ENCODE measurements at regions of chr21 and their contacts with region 1.

Region 1: GRCh38 chr21:31580866-31581276 is 78.6 kb upstream of the SOD1 start:
- DNase-seq: peak; percentile 69 to 70
- H3K4me3 ChIP-seq: no peak overlapping the region
- H3K4me3 Mint-ChIP-seq: no peak overlapping the region
- H3K27ac Mint-ChIP-seq: no peak overlapping the region
- H3K4me1 ChIP-seq: no peaks in the 10 kb centered on the region
- H3K4me1 Mint-ChIP-seq: no peaks in the 10 kb centered on the region
- H3K27me3 ChIP-seq: no peaks in the 10 kb centered on the region
- H3K27me3 Mint-ChIP-seq: peaks cover 4% of the 10 kb centered on the region
- CTCF ChIP-seq: peak; percentile 77 to 78

Region 2: GRCh38 chr21:31098576-31099005 is 482.3 kb before region 1 on chr21:
- CTCF ChIA-PET with region 1: no interaction called
- POLR2A ChIA-PET with region 1: no interaction called
- intact Hi-C with region 1: loop called (anchors 2 kb)
- DNase-seq: peak; percentile 60 to 67
- H3K4me3 ChIP-seq: no peak overlapping the region
- H3K4me3 Mint-ChIP-seq: no peak overlapping the region
- H3K27ac Mint-ChIP-seq: no peak overlapping the region
- H3K4me1 ChIP-seq: 0 out of 2 replicates have a peak, but pooled peaks cover 5% of the 10 kb centered on the region
- H3K4me1 Mint-ChIP-seq: no peaks in the 10 kb centered on the region
- H3K27me3 ChIP-seq: no peaks in the 10 kb centered on the region; the same call in 1 of the 2 replicates
- H3K27me3 Mint-ChIP-seq: peaks cover 9% of the 10 kb centered on the region
- CTCF ChIP-seq: peak; percentile 79 to 86

Region 3: DNA sequence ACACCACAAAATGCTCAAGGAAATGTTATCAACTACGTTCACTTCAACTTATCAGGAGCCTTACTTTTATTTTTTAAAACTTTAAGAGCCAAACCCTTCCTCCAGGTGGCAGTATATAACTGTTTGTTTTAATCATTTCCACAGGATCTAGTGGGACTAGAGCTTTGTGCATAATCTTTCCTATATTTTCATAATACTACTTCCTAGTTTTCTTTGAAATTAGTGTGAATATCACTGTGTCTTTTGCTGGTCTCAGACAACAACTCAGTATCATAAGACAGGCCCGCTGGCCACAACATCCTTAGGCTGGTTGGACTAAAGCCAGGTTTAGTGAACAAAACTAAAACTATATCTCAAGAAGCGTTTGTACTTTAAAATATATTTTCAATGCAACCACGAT is 382.3 kb before region 1 on chr21:
- CTCF ChIA-PET with region 1: interaction called, 10 read pairs
- POLR2A ChIA-PET with region 1: no interaction called
- intact Hi-C with region 1: loop called (anchors 1 kb)
- DNase-seq: peak in 1 of 2 experiments; percentile 43
- H3K4me3 ChIP-seq: no peak overlapping the region
- H3K4me3 Mint-ChIP-seq: no peak overlapping the region
- H3K27ac Mint-ChIP-seq: no peak overlapping the region
- H3K4me1 ChIP-seq: peaks cover 14% of the 10 kb centered on the region; the same call in 1 of the 2 replicates
- H3K4me1 Mint-ChIP-seq: peaks cover 11% of the 10 kb centered on the region
- H3K27me3 ChIP-seq: no peaks in the 10 kb centered on the region
- H3K27me3 Mint-ChIP-seq: no peaks in the 10 kb centered on the region
- CTCF ChIP-seq: peak; percentile 36 to 40

Region 4: GRCh38 chr21:31347435-31348032 is 233.3 kb before region 1 on chr21:
- CTCF ChIA-PET with region 1: interaction called, 4 read pairs
- POLR2A ChIA-PET with region 1: no interaction called
- intact Hi-C with region 1: loop called (anchors 1 kb)
- DNase-seq: peak in 1 of 2 experiments; percentile 32
- H3K4me3 ChIP-seq: no peak overlapping the region
- H3K4me3 Mint-ChIP-seq: peak overlapping the region; percentile 44
- H3K27ac Mint-ChIP-seq: no peak overlapping the region
- H3K4me1 ChIP-seq: no peaks in the 10 kb centered on the region
- H3K4me1 Mint-ChIP-seq: peaks cover 9% of the 10 kb centered on the region
- H3K27me3 ChIP-seq: no peaks in the 10 kb centered on the region
- H3K27me3 Mint-ChIP-seq: no peaks in the 10 kb centered on the region
- CTCF ChIP-seq: peak; percentile 55 to 58

Region 5: DNA sequence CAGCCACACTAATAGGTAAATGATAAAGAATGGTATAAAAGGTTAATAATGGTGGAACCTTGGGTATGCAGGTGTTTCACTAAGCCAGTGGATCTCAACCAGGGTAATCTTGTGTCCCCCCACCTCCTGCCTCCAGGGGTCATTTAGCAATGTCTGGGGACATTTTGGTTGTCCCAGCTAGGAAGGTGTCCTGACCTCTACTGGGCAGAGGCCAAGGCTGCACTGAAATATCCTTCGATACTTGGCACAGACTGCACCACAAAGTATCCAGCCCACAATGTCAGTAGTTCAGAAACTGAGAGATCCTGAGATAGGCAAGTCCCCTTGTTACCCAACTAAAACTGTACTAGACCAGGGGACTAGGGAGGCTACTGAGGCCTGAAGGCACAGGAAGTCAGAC is 123.2 kb before region 1 on chr21:
- CTCF ChIA-PET with region 1: interaction called, 3 read pairs
- POLR2A ChIA-PET with region 1: no interaction called
- intact Hi-C with region 1: loop called (anchors 5 kb)
- DNase-seq: peak in 1 of 2 experiments; percentile 12
- H3K4me3 ChIP-seq: no peak overlapping the region
- H3K4me3 Mint-ChIP-seq: no peak overlapping the region
- H3K27ac Mint-ChIP-seq: no peak overlapping the region
- H3K4me1 ChIP-seq: no peaks in the 10 kb centered on the region
- H3K4me1 Mint-ChIP-seq: no peaks in the 10 kb centered on the region
- H3K27me3 ChIP-seq: no peaks in the 10 kb centered on the region
- H3K27me3 Mint-ChIP-seq: no peaks in the 10 kb centered on the region
- CTCF ChIP-seq: peak; percentile 17 to 42

Region 6: GRCh38 chr21:31498981-31499380 is 81.9 kb before region 1 on chr21:
- CTCF ChIA-PET with region 1: interaction called, 7 read pairs
- POLR2A ChIA-PET with region 1: no interaction called
- intact Hi-C with region 1: loop called (anchors 1 kb)
- DNase-seq: peak in 1 of 2 experiments; percentile 38
- H3K4me3 ChIP-seq: no peak overlapping the region
- H3K4me3 Mint-ChIP-seq: no peak overlapping the region
- H3K27ac Mint-ChIP-seq: no peak overlapping the region
- H3K4me1 ChIP-seq: peaks cover 28% of the 10 kb centered on the region
- H3K4me1 Mint-ChIP-seq: peaks cover 13% of the 10 kb centered on the region
- H3K27me3 ChIP-seq: no peaks in the 10 kb centered on the region
- H3K27me3 Mint-ChIP-seq: no peaks in the 10 kb centered on the region
- CTCF ChIP-seq: peak in 1 of 2 experiments; percentile 5

Region 7: DNA sequence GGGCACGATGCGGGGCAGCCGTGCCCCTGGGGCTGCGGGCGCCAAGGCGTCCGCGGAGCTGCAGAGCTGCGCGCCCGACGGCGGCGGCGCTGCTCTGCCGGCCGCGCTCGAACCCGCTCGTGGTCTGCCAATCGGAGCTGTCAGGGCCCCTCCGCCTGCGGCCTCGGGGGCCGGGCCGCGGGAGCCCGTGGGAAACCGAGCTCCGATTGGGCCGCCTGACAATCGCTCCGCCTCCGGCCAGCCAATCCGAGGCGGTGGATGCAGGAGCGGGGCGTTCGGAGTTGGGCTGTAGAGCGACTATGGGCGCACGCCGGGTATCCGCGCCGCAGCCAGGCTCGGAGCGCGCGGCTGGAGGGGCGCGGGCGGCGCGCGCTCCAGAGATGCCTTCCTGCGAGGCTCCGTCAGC is 21.9 kb before region 1 on chr21:
- CTCF ChIA-PET with region 1: interaction called, 18 read pairs
- POLR2A ChIA-PET with region 1: no interaction called
- intact Hi-C with region 1: no loop called
- DNase-seq: peak; percentile 94
- H3K4me3 ChIP-seq: peak overlapping the region; percentile 68
- H3K4me3 Mint-ChIP-seq: peak overlapping the region; percentile 77
- H3K27ac Mint-ChIP-seq: peak overlapping the region; percentile 58
- H3K4me1 ChIP-seq: peaks cover 9% of the 10 kb centered on the region; the same call in 1 of the 2 replicates
- H3K4me1 Mint-ChIP-seq: no peaks in the 10 kb centered on the region
- H3K27me3 ChIP-seq: no peaks in the 10 kb centered on the region; the same call in 1 of the 2 replicates
- H3K27me3 Mint-ChIP-seq: peaks cover 5% of the 10 kb centered on the region
- CTCF ChIP-seq: peak in 1 of 2 experiments; percentile 16

Measured in Caco-2 (cell line).